ENCODE measurements at regions of chr9 and their contacts with region 1.

Region 1: DNA sequence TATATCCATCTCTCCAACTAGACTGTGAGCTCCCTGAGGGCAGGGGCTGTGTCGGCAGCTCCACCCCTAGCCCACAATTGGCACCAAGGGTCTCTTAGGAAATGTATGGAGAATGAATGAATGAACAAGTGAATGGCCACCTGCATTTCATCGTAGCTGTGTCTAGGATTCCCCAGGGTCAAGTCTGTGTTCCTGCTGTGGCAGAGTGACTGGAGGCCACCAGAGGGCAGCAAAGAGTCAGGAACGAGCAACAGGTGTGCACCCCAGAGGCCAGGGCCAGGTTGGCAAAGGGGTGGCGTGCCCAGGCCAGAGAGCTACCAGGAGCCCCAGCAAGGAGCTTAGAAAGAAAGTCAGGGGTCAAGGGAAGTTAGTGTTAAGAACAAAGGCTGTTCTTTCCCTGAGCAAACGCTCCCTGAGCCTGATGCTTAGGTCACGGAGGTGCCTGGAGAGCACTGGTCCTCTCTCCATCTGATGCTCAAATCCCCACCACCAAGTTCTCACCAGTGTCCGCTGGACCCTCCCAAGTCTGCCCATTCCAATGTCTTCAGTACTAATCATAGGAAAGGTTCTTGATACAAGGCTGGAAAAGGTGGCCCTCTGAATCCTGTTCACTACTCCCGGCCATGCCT is 160.7 kb downstream of the PAX5 start:
- DNase-seq: peak; percentile 58 to 82 (median 66)
- ATAC-seq: peak; percentile 79
- H3K4me3 ChIP-seq: no peak overlapping the region
- H3K4me3 Mint-ChIP-seq: no peak overlapping the region
- H3K27ac ChIP-seq: no peak overlapping the region
- H3K27ac Mint-ChIP-seq: no peak overlapping the region
- H3K4me1 ChIP-seq: no peaks in the 10 kb centered on the region
- H3K4me1 Mint-ChIP-seq: no peaks in the 10 kb centered on the region
- H3K27me3 ChIP-seq: no peaks in the 10 kb centered on the region
- H3K27me3 Mint-ChIP-seq: peaks cover 5% of the 10 kb centered on the region
- CTCF ChIP-seq: peak; percentile 85

Region 2: GRCh38 chr9:37309136-37309535 is 435.8 kb after region 1 on chr9:
- CTCF ChIA-PET with region 1: interaction called, 4 read pairs
- POLR2A ChIA-PET with region 1: no interaction called
- intact Hi-C with region 1: loop called in 1 of 2 experiments (anchors 1 kb)
- DNase-seq: peak in 5 of 14 experiments; percentile 5 to 38 (median 16)
- ATAC-seq: no peak
- H3K4me3 ChIP-seq: no peak overlapping the region
- H3K4me3 Mint-ChIP-seq: no peak overlapping the region
- H3K27ac ChIP-seq: no peak overlapping the region
- H3K27ac Mint-ChIP-seq: no peak overlapping the region
- H3K4me1 ChIP-seq: no peaks in the 10 kb centered on the region
- H3K4me1 Mint-ChIP-seq: peaks cover 5% of the 10 kb centered on the region
- H3K27me3 ChIP-seq: no peaks in the 10 kb centered on the region
- H3K27me3 Mint-ChIP-seq: no peaks in the 10 kb centered on the region
- CTCF ChIP-seq: peak; percentile 16

Region 3: GRCh38 chr9:37329576-37329975 is 456.2 kb after region 1 on chr9:
- CTCF ChIA-PET with region 1: interaction called, 6 read pairs
- POLR2A ChIA-PET with region 1: no interaction called
- intact Hi-C with region 1: loop called (anchors 1 to 5 kb)
- DNase-seq: peak in 4 of 14 experiments; percentile 7 to 45 (median 42)
- ATAC-seq: no peak
- H3K4me3 ChIP-seq: no peak overlapping the region
- H3K4me3 Mint-ChIP-seq: no peak overlapping the region
- H3K27ac ChIP-seq: no peak overlapping the region
- H3K27ac Mint-ChIP-seq: no peak overlapping the region
- H3K4me1 ChIP-seq: no peaks in the 10 kb centered on the region
- H3K4me1 Mint-ChIP-seq: peaks cover 2% of the 10 kb centered on the region
- H3K27me3 ChIP-seq: no peaks in the 10 kb centered on the region
- H3K27me3 Mint-ChIP-seq: no peaks in the 10 kb centered on the region
- CTCF ChIP-seq: no peak

Region 4: GRCh38 chr9:37364751-37365360 is 491.5 kb after region 1 on chr9:
- CTCF ChIA-PET with region 1: no interaction called
- POLR2A ChIA-PET with region 1: no interaction called
- intact Hi-C with region 1: loop called in 1 of 2 experiments (anchors 10 kb)
- DNase-seq: peak in 4 of 14 experiments; percentile 9 to 26 (median 22)
- ATAC-seq: no peak
- H3K4me3 ChIP-seq: no peak overlapping the region
- H3K4me3 Mint-ChIP-seq: no peak overlapping the region
- H3K27ac ChIP-seq: no peak overlapping the region
- H3K27ac Mint-ChIP-seq: no peak overlapping the region
- H3K4me1 ChIP-seq: no peaks in the 10 kb centered on the region
- H3K4me1 Mint-ChIP-seq: no peaks in the 10 kb centered on the region
- H3K27me3 ChIP-seq: no peaks in the 10 kb centered on the region
- H3K27me3 Mint-ChIP-seq: no peaks in the 10 kb centered on the region
- CTCF ChIP-seq: no peak

Region 5: DNA sequence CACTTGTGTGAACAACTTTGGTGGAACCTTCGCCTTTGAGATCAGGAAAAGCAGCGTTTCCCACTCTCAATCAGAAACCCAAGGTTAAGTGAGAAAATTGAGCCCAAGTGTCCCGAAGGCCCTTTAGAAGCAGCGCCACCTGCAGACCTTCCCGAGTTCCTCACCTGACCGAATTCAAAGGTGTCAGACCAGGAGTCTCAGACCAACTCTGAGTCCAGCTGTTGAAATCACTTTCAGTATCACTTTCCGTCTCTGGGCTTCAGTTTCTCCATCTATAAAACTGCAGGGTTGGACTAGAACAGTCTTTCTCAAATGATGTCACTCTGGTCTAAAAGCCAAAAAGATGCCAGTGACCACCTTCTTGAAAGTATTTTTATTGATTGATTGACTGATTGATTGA is 517.4 kb after region 1 on chr9:
- CTCF ChIA-PET with region 1: no interaction called
- POLR2A ChIA-PET with region 1: no interaction called
- intact Hi-C with region 1: loop called (anchors 2 to 5 kb)
- DNase-seq: peak in 7 of 14 experiments; percentile 7 to 53 (median 39)
- ATAC-seq: no peak
- H3K4me3 ChIP-seq: no peak overlapping the region
- H3K4me3 Mint-ChIP-seq: no peak overlapping the region
- H3K27ac ChIP-seq: no peak overlapping the region
- H3K27ac Mint-ChIP-seq: no peak overlapping the region
- H3K4me1 ChIP-seq: no peaks in the 10 kb centered on the region
- H3K4me1 Mint-ChIP-seq: no peaks in the 10 kb centered on the region
- H3K27me3 ChIP-seq: no peaks in the 10 kb centered on the region
- H3K27me3 Mint-ChIP-seq: no peaks in the 10 kb centered on the region
- CTCF ChIP-seq: peak; percentile 28

Region 6: DNA sequence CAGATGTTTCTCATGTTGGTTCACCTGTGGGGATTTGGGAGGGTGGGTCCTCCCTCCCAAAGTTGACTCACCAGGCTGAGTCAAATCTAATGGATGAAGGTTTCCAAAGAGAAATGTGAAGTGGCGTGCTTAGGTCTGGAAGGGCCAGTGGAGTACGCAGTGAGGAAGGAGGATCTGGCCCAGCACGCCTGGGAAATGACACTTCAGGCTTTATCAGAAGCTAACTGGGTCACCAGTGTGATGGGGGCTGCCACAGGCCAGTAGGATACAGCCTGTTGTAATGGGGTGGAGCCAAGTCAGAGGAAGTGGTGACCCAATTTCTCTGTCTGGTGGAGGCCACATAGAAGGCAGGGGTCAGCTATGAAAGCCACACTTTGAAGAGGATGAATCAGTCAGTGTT is 630.4 kb after region 1 on chr9:
- CTCF ChIA-PET with region 1: no interaction called
- POLR2A ChIA-PET with region 1: no interaction called
- intact Hi-C with region 1: loop called (anchors 5 to 10 kb)
- DNase-seq: peak in 9 of 14 experiments; percentile 5 to 83 (median 22)
- ATAC-seq: peak; percentile 79
- H3K4me3 ChIP-seq: no peak overlapping the region
- H3K4me3 Mint-ChIP-seq: peak overlapping the region; percentile 58
- H3K27ac ChIP-seq: peak overlapping the region in 1 of 2 donors; percentile 47
- H3K27ac Mint-ChIP-seq: peak overlapping the region; percentile 77
- H3K4me1 ChIP-seq: peaks cover 36% of the 10 kb centered on the region
- H3K4me1 Mint-ChIP-seq: peaks cover 14% of the 10 kb centered on the region
- H3K27me3 ChIP-seq: no peaks in the 10 kb centered on the region
- H3K27me3 Mint-ChIP-seq: no peaks in the 10 kb centered on the region
- CTCF ChIP-seq: no peak

Region 7: GRCh38 chr9:37511016-37512010 is 638.0 kb after region 1 on chr9:
- CTCF ChIA-PET with region 1: no interaction called
- POLR2A ChIA-PET with region 1: no interaction called
- intact Hi-C with region 1: loop called (anchors 5 to 10 kb)
- DNase-seq: no peak
- ATAC-seq: no peak
- H3K4me3 ChIP-seq: no peak overlapping the region
- H3K4me3 Mint-ChIP-seq: no peak overlapping the region
- H3K27ac ChIP-seq: no peak overlapping the region
- H3K27ac Mint-ChIP-seq: no peak overlapping the region
- H3K4me1 ChIP-seq: peaks cover 9% of the 10 kb centered on the region
- H3K4me1 Mint-ChIP-seq: no peaks in the 10 kb centered on the region
- H3K27me3 ChIP-seq: no peaks in the 10 kb centered on the region
- H3K27me3 Mint-ChIP-seq: no peaks in the 10 kb centered on the region
- CTCF ChIP-seq: no peak

Measured in CD4-positive, alpha-beta T cell (primary cell).